ENCODE measurements at regions of chrX and their contacts with region 1.

Region 1: GRCh38 chrX:80578517-80579105 is 158.4 kb downstream of the TENT5D start:
- DNase-seq: no peak
- H3K4me3 Mint-ChIP-seq: no peak overlapping the region
- H3K27ac Mint-ChIP-seq: no peak overlapping the region
- H3K4me1 Mint-ChIP-seq: no peaks in the 10 kb centered on the region
- H3K27me3 Mint-ChIP-seq: no peaks in the 10 kb centered on the region

Region 2: GRCh38 chrX:80430826-80431504 is 147.6 kb before region 1 on chrX:
- intact Hi-C with region 1: loop called (anchors 2 kb)
- DNase-seq: no peak
- H3K4me3 Mint-ChIP-seq: no peak overlapping the region
- H3K27ac Mint-ChIP-seq: no peak overlapping the region
- H3K4me1 Mint-ChIP-seq: no peaks in the 10 kb centered on the region
- H3K27me3 Mint-ChIP-seq: no peaks in the 10 kb centered on the region